ENCODE measurements at regions of chr10 and their contacts with region 1.

Region 1: GRCh38 chr10:92087750-92088395 is 164.3 kb downstream of the BTAF1 start:
- DNase-seq: peak; percentile 51 to 74 (median 62)
- H3K4me3 ChIP-seq: no peak overlapping the region
- H3K27ac ChIP-seq: peak overlapping the region in 1 of 2 donors; percentile 53
- H3K4me1 ChIP-seq: peaks cover 2% of the 10 kb centered on the region
- H3K27me3 ChIP-seq: peaks cover 5% of the 10 kb centered on the region
- CTCF ChIP-seq: peak; percentile 78 to 85 (median 81)
- EP300 ChIP-seq: no peak
- POLR2A ChIP-seq: no peak

Region 2: GRCh38 chr10:92164036-92164696 is 76.3 kb after region 1 on chr10:
- intact Hi-C with region 1: no loop called
- DNase-seq: no peak
- H3K4me3 ChIP-seq: no peak overlapping the region
- H3K27ac ChIP-seq: no peak overlapping the region
- H3K4me1 ChIP-seq: no peaks in the 10 kb centered on the region
- H3K27me3 ChIP-seq: no peaks in the 10 kb centered on the region
- CTCF ChIP-seq: no peak
- EP300 ChIP-seq: no peak
- POLR2A ChIP-seq: no peak

Region 3: DNA sequence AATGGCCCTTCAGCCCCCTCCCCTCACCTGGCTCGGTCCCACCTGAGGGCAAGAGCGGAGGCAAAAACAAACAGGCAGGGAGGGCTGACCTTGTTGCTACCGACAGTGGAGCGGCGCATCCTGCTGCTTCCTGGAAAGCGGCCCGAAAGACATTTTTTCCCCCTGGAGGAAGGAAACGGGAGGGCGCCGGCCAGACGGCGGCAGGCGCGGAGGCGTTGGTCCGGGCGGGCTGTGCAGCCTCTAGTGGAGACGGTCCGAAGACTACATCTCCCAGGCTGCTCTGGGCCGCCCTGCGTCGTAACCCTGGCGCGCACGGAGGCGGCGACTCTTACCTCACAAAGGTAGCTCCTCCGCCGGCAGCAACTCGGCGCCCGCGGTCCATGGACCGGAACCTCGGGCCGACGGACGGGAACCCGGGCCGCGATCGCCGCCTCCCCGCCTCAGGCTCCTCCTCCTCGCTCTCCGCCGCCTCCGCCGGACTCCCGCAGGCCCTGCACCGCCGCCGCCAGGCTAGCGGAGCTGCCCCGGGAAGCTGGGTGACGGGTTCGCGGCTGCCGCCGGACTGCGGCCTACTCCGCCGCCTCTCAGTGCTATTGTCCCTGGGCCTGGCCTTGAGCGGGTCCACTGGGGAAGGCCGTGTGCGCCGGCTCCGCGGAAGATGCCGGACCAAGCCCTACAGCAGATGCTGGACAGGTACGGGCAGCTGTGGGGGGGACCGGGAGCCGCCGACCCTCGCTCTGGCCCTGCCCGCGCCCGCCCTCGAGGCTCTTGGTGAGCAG is 203.2 kb after region 1 on chr10 and contains the starts of genes CPEB3 and MARCHF5:
- intact Hi-C with region 1: loop called in 2 of 4 experiments (anchors 5 kb)
- DNase-seq: peak; percentile 96 to 97 (median 96)
- H3K4me3 ChIP-seq: peak within 1 kb of the TSS; percentile 80
- H3K27ac ChIP-seq: peak within 1 kb of the TSS; percentile 86 to 93
- H3K4me1 ChIP-seq: peaks cover 3% of the 10 kb centered on the region
- H3K27me3 ChIP-seq: no peaks in the 10 kb centered on the region
- CTCF ChIP-seq: peak; percentile 56 to 96 (median 95)
- EP300 ChIP-seq: no peak
- POLR2A ChIP-seq: peak; percentile 90
- total RNA-seq, gene CPEB3: 4.8 to 6.6 (median 5.7) TPM
- total RNA-seq, gene MARCHF5: 15.4 to 44.1 (median 36.4) TPM